H1 (cell line): ENCODE measurements at regions of chr6 and their contacts with region 1.

Region 1: GRCh38 chr6:7723041-7723447 is 2.9 kb upstream of the BMP6 start:
- DNase-seq: peak; percentile 61 to 89
- H3K4me3 ChIP-seq: no peak overlapping the region
- H3K27ac ChIP-seq: no peak overlapping the region
- H3K4me1 ChIP-seq: peaks cover 2 to 13% (median 4%) of the 10 kb centered on the region in 4 experiments; a peak in 5 of 7 replicates
- H3K27me3 ChIP-seq: peaks cover 44 to 51% (median 47%) of the 10 kb centered on the region in 4 experiments
- CTCF ChIP-seq: peak; percentile 28 to 59 (median 54)
- EP300 ChIP-seq: no peak
- POLR2A ChIP-seq: no peak
- RAD21 ChIP-seq: peak; percentile 64 to 71

Region 2: DNA sequence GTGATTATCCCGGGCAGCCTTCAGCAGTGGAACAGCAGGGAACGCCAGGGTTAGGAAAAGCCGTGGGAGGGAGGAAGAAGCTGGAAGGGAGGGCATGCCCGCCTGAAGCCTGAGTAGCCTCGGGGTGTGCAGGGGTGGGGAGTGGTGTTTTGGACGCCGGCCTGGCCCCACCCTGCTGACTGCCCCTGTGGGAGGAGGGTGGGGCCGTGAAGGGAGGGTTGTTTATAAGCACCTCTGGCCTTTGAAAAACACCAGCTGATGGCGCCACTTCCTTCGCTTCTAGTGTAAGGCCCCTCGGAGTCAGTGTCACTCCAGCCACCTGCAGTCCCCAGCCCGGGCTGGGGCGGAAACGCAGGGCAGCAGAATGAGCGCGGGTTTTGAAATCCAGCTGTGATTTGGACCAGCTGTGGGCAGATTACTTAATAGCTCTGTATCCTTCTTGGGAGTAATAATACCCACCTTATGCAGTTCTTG is 49.9 kb before region 1 on chr6:
- CTCF ChIA-PET with region 1: interaction called, 14 read pairs
- POLR2A ChIA-PET with region 1: interaction called, 5 read pairs
- DNase-seq: peak; percentile 25 to 74
- H3K4me3 ChIP-seq: peak overlapping the region in 3 of 4 experiments; percentile 4 to 48 (median 26); a peak in 5 of 8 replicates
- H3K27ac ChIP-seq: no peak overlapping the region
- H3K4me1 ChIP-seq: peaks cover 0 to 4% (median under 1%) of the 10 kb centered on the region in 4 experiments; a peak in 2 of 7 replicates
- H3K27me3 ChIP-seq: no peaks in the 10 kb centered on the region
- CTCF ChIP-seq: peak; percentile 17 to 62 (median 60)
- EP300 ChIP-seq: no peak
- POLR2A ChIP-seq: no peak
- RAD21 ChIP-seq: peak; percentile 70 to 79

Region 3: DNA sequence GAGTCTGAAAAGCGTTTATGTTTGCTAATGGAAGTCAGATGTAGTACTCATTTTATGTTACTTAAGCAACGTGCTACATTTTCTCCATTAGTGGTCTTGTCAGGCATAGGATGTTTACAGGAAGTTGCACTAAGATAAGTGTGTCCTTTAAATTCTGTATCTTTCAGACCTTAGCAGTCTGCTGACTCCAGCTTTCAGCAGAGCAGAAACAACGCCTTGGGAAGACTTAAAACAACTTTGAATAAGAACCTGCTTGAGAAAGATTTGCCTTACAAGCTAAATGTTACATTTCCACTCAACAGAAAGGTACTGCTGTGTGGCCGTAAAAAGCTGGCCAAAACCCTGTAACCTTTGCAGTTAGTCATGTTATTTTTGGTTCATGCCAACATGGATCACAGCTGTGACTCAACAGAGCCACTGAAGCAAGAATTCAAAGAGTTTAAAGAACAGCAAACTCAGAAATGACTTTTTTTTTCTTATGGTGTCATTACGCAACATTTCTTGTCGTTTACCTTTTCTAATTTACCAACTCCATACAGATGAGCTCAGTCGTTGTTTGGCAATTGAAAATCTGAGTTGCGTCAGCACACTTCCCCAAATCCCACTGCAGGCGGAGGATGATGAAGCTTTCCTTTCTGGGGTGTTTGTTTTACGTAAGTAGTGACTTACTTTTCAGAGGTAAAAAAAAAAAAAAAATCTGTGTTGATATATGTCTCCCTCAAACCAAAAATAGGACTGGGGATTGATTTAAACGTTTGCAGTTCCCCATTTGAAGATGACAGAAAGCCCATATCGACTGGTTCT is 25.0 kb before region 1 on chr6:
- CTCF ChIA-PET with region 1: interaction called, 10 read pairs
- POLR2A ChIA-PET with region 1: interaction called, 3 read pairs
- DNase-seq: no peak
- H3K4me3 ChIP-seq: no peak overlapping the region
- H3K27ac ChIP-seq: no peak overlapping the region
- H3K4me1 ChIP-seq: peaks cover 0 to 5% (median 0%) of the 10 kb centered on the region in 4 experiments; a peak in 2 of 7 replicates
- H3K27me3 ChIP-seq: no peaks in the 10 kb centered on the region
- CTCF ChIP-seq: no peak
- EP300 ChIP-seq: no peak
- POLR2A ChIP-seq: no peak
- RAD21 ChIP-seq: no peak

Region 4: GRCh38 chr6:7707787-7708186 is 15.3 kb before region 1 on chr6:
- CTCF ChIA-PET with region 1: interaction called, 16 read pairs
- POLR2A ChIA-PET with region 1: no interaction called
- DNase-seq: no peak
- H3K4me3 ChIP-seq: no peak overlapping the region
- H3K27ac ChIP-seq: no peak overlapping the region
- H3K4me1 ChIP-seq: no peaks in the 10 kb centered on the region
- H3K27me3 ChIP-seq: no peaks in the 10 kb centered on the region
- CTCF ChIP-seq: no peak
- EP300 ChIP-seq: no peak
- POLR2A ChIP-seq: no peak
- RAD21 ChIP-seq: no peak

Region 5: DNA sequence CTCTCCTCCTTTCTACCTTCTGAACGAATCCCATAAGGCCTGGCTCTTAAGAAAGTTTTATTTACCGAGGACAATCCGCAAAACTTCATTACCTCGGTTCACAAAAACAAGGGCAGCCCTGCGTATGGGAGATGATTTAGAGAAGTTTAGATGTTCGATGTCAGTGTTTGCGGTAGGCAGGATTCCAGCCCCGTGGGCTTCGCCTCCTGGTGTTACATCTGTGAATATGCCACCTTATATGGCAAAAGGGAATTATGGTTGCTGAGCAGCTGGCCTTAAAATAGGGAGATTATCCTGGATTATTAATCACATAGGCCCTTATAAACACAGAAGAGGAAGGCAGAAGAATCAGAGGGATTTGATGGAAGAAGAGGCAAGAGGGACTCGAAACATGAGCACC is 24.0 kb after region 1 on chr6:
- CTCF ChIA-PET with region 1: interaction called, 13 read pairs
- POLR2A ChIA-PET with region 1: no interaction called
- DNase-seq: no peak
- H3K4me3 ChIP-seq: no peak overlapping the region
- H3K27ac ChIP-seq: no peak overlapping the region
- H3K4me1 ChIP-seq: peaks cover 0 to 4% (median 0%) of the 10 kb centered on the region in 4 experiments; a peak in 1 of 7 replicates
- H3K27me3 ChIP-seq: no peaks in the 10 kb centered on the region
- CTCF ChIP-seq: peak in 2 of 3 experiments; percentile 1 to 9; a peak in 1 of 4 replicates
- EP300 ChIP-seq: no peak
- POLR2A ChIP-seq: no peak
- RAD21 ChIP-seq: no peak

Region 6: DNA sequence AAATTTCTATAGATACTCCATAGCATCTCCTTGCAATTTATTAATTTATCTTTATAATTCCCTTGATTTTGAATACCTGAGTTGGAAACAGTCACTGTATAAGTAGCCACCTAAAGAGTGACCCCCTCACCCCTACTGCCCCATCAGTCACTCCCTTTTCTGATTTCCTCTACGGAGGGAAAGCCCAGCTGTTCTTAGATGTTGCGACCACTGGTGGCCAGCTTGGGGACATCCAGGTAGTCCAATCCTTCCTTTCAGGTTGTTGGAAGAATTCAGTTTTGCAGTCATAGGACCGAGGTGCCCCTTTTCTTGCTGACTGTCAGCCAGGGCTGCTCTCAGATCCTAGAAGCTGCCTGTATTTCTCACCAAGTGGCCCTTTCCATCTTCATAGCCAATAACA is 90.7 kb after region 1 on chr6:
- CTCF ChIA-PET with region 1: interaction called, 16 read pairs
- POLR2A ChIA-PET with region 1: no interaction called
- DNase-seq: no peak
- H3K4me3 ChIP-seq: no peak overlapping the region
- H3K27ac ChIP-seq: no peak overlapping the region
- H3K4me1 ChIP-seq: no peaks in the 10 kb centered on the region
- H3K27me3 ChIP-seq: no peaks in the 10 kb centered on the region
- CTCF ChIP-seq: peak; percentile 42 to 56 (median 54)
- EP300 ChIP-seq: no peak
- POLR2A ChIP-seq: no peak
- RAD21 ChIP-seq: peak; percentile 50 to 63

Region 7: GRCh38 chr6:7992002-7992815 is 269.2 kb after region 1 on chr6:
- CTCF ChIA-PET with region 1: interaction called, 11 read pairs
- POLR2A ChIA-PET with region 1: no interaction called
- DNase-seq: no peak
- H3K4me3 ChIP-seq: no peak overlapping the region
- H3K27ac ChIP-seq: no peak overlapping the region
- H3K4me1 ChIP-seq: no peaks in the 10 kb centered on the region
- H3K27me3 ChIP-seq: no peaks in the 10 kb centered on the region
- CTCF ChIP-seq: peak in 2 of 3 experiments; percentile 16 to 27; a peak in 2 of 4 replicates
- EP300 ChIP-seq: no peak
- POLR2A ChIP-seq: no peak
- RAD21 ChIP-seq: peak; percentile 55 to 62